ENCODE measurements at regions of chr10 and their contacts with region 1.

Region 1: DNA sequence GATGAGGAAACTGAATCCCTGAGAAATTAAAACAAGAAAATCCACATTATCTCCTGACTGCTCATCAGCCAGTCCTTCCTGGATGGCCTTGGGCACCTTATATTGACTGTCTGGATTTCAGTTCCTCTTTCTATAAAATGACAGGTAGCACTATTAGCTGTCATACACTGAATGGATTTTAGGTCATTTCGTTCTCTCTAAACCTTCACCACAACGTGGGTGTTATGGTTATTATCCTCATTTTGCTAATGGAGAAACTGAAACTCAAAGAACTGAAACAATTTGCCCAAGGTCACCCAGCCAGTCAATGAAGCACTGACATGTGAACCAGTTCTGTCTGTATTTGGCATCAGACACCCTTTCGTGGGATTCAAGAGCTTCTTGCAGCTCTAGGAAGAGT is 193.8 kb downstream of the CYP26A1 start:
- DNase-seq: no peak
- H3K4me3 ChIP-seq: no peak overlapping the region
- H3K27ac ChIP-seq: no peak overlapping the region
- H3K4me1 ChIP-seq: peaks cover 1% of the 10 kb centered on the region
- H3K27me3 ChIP-seq: no peaks in the 10 kb centered on the region
- CTCF ChIP-seq: no peak

Region 2: DNA sequence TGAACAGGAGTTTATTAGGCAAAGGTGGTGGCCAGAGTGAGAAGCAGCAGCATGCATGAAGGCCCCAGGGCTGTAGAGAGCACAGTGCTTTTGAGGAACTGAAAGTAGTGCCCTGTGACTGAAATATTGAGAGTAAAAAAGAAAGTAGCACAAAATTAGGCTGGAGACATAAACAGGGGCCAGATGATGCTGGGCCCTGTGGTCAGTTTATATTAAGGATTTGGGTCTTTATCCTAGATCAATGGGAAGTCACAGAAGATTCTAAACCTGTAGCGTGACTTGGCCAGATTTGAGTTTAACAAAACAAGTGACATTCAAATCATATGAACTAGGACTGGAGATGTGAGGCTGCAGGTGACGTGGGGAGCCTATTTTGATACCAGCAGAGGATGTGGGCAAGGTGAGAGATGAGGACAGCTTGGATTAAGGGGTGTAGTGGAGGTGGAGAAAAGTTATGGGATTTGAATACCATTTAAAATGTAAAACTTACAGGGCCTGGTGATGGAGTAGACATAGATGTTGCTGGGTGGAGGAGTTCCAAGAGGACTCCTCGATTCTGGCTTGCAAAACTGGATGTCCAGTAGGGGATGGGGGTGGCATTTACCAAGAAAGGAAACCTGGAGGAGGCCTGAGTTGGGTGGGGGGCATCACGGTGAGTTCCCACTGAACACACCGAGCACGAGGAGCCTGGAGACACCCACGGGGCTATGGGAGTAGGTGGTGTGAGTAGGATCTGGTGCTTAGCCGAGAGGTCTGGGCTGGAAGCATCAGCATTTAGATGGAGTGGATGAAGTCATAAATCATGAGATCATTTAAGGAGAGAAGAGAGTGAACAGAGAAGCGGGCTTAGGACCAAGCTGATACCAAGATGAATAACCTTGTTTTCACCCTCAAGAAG is 524.9 kb before region 1 on chr10:
- CTCF ChIA-PET with region 1: no interaction called
- dilution Hi-C with region 1: no loop called
- in situ Hi-C with region 1: loop called in 1 of 2 experiments (anchors 25 kb)
- intact Hi-C with region 1: no loop called
- DNase-seq: no peak
- H3K4me3 ChIP-seq: no peak overlapping the region
- H3K27ac ChIP-seq: no peak overlapping the region
- H3K4me1 ChIP-seq: no peaks in the 10 kb centered on the region
- H3K27me3 ChIP-seq: no peaks in the 10 kb centered on the region
- CTCF ChIP-seq: no peak

Region 3: GRCh38 chr10:93062514-93063143 is 204.9 kb before region 1 on chr10:
- CTCF ChIA-PET with region 1: no interaction called
- dilution Hi-C with region 1: no loop called
- in situ Hi-C with region 1: no loop called
- intact Hi-C with region 1: no loop called
- DNase-seq: peak; percentile 48
- H3K4me3 ChIP-seq: peak overlapping the region in 2 of 3 experiments; percentile 33 to 34
- H3K27ac ChIP-seq: no peak overlapping the region
- H3K4me1 ChIP-seq: peaks cover 16% of the 10 kb centered on the region
- H3K27me3 ChIP-seq: peaks cover 40% of the 10 kb centered on the region
- CTCF ChIP-seq: peak; percentile 30 to 52

Region 4: DNA sequence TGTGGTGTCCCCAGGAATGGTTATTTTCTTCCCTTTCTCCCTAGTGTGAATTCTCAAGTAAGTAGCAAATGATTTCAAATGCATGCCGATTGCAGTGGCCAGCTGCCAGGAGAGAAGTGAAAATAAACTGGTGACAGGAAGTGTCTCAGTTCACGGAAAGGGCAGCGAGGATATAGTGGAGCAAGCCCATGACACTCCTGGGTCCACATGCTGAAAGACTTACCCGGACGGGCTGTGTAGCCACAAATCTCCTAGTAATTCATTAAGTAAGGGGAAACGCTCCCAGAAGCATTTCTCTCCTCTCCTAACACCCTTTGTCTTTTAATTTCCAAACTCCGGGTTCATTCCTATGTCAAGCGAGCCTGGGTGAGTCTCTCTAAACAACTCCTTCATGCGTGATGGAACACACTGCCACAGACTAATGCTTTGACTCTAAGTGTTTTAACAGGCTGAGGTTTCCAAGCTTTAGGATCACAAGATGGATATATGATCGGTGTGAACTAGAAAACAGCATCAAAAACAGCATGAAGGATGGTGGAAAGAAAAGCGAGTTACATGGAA is 68.2 kb before region 1 on chr10:
- CTCF ChIA-PET with region 1: no interaction called
- dilution Hi-C with region 1: loop called (anchors 10 kb)
- in situ Hi-C with region 1: no loop called
- intact Hi-C with region 1: no loop called
- DNase-seq: peak; percentile 6
- H3K4me3 ChIP-seq: no peak overlapping the region
- H3K27ac ChIP-seq: no peak overlapping the region
- H3K4me1 ChIP-seq: peaks cover 9% of the 10 kb centered on the region
- H3K27me3 ChIP-seq: no peaks in the 10 kb centered on the region
- CTCF ChIP-seq: no peak